ENCODE measurements at regions of chr17 and their contacts with region 1.

Region 1: GRCh38 chr17:82917691-82918345 is 78.0 kb upstream of the ZNF750 start:
- DNase-seq: peak; percentile 62
- ATAC-seq: peak; percentile 79
- H3K4me3 Mint-ChIP-seq: no peak overlapping the region
- H3K27ac Mint-ChIP-seq: no peak overlapping the region
- H3K4me1 Mint-ChIP-seq: 0 out of 2 replicates have a peak, but pooled peaks cover 3% of the 10 kb centered on the region
- H3K27me3 Mint-ChIP-seq: no peaks in the 10 kb centered on the region
- CTCF ChIP-seq: no peak

Region 2: DNA sequence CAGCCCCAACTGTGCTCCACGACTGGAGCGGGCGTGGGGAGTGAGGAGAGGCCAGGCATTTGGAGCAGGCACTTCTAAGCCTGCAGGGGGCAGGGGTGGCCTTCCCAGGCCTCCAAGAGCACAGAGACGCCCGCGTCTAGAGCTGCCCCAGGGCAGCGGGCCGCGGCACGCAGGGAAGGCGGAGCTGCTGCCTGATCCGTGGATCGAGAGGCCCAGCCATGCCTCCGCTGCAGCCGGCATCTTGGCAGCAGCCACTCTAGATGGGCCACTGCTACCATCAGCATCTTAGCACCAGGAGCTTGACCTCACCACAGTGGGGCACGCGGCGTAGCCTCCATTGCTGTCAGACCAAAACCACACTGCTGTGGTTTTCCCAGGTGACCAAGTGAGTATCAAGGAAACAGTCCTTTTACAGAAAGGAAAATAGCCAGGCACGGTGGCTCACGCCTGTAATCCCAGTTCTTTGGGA is 249.2 kb before region 1 on chr17:
- CTCF ChIA-PET with region 1: interaction called, 10 read pairs
- POLR2A ChIA-PET with region 1: no interaction called
- DNase-seq: peak; percentile 79
- ATAC-seq: peak; percentile 98
- H3K4me3 Mint-ChIP-seq: 0 out of 2 replicates have a peak overlapping the region, but pooled peaks have one; percentile 26
- H3K27ac Mint-ChIP-seq: peak overlapping the region; percentile 83; the same call in 1 of the 2 replicates
- H3K4me1 Mint-ChIP-seq: peaks cover 4% of the 10 kb centered on the region
- H3K27me3 Mint-ChIP-seq: no peaks in the 10 kb centered on the region
- CTCF ChIP-seq: 0 out of 2 replicates have a peak, but pooled peaks have one; percentile 21

Region 3: GRCh38 chr17:82781894-82782274 is 135.9 kb before region 1 on chr17:
- CTCF ChIA-PET with region 1: interaction called, 16 read pairs
- POLR2A ChIA-PET with region 1: no interaction called
- DNase-seq: peak; percentile 87
- ATAC-seq: peak; percentile 98
- H3K4me3 Mint-ChIP-seq: no peak overlapping the region
- H3K27ac Mint-ChIP-seq: 0 out of 2 replicates have a peak overlapping the region, but pooled peaks have one; percentile 8
- H3K4me1 Mint-ChIP-seq: peaks cover 5% of the 10 kb centered on the region
- H3K27me3 Mint-ChIP-seq: no peaks in the 10 kb centered on the region
- CTCF ChIP-seq: peak; percentile 77

Region 4: DNA sequence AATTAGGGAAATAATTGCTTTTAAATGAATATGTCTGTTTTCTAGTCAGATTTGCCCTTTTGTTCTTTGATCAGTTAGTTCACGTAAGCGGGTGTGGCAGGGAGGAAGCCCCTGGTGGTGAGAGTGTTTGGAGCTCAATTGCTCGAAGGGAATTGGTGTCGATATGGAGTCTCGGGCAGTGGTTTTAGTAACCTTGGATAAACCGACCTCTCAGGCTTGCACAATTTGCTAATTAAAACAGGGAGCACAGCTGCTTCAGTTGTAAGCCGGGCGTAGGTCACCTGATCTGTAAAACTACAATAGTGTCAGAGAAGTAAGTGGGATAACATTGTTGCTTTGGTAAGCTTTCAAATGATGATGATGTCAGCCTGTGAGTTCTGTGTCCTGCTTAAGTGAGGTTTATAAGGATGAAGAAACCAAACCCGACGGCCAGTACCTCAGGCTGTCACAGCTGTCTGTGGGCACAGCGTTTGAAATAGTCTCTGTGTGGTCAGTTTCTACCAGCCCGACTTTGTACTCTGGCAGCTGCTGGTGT is 80.9 kb before region 1 on chr17:
- CTCF ChIA-PET with region 1: interaction called, 13 read pairs
- POLR2A ChIA-PET with region 1: no interaction called
- DNase-seq: no peak
- ATAC-seq: no peak
- H3K4me3 Mint-ChIP-seq: no peak overlapping the region
- H3K27ac Mint-ChIP-seq: peak overlapping the region; percentile 92
- H3K4me1 Mint-ChIP-seq: peaks cover 51% of the 10 kb centered on the region
- H3K27me3 Mint-ChIP-seq: no peaks in the 10 kb centered on the region
- CTCF ChIP-seq: no peak

Region 5: DNA sequence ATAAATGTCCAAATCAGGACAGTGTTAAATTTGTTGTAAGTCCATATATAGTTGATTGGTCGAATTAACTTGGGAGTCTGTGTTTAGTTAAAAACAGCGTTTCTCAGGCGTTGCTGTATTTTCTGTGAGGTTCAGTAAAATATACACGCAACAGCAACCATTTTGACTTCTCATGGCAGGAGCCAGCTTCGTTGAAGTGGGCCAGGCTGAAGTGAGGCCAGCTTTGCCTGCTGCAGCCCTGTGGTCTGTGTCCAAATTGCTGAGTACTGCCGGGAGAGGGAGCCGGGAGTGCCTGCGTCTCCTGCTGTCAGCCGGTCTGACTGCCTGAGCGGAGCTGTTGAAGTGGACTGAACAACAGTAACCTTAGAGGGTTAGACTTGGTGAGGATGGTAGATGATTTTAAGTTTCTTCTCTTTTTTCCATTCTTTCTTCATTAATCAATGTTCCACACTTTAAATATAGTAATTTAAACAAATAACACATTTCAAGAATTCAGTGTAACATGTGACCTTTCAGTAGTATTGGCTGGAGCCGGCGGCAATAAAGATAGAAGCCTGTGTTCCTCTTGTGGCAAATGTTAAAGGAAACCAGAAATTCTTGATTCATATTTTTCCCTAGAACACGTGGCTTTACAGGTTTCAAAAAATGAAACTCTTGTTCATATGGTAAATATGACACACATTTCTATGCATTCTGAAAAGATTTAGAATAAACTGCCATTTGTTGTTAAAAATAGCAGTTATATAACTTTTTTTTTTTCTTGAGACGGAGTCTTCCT is 41.0 kb before region 1 on chr17:
- CTCF ChIA-PET with region 1: interaction called, 14 read pairs
- POLR2A ChIA-PET with region 1: no interaction called
- DNase-seq: peak; percentile 41
- ATAC-seq: peak; percentile 47
- H3K4me3 Mint-ChIP-seq: no peak overlapping the region
- H3K27ac Mint-ChIP-seq: peak overlapping the region; percentile 93
- H3K4me1 Mint-ChIP-seq: peaks cover 35% of the 10 kb centered on the region
- H3K27me3 Mint-ChIP-seq: no peaks in the 10 kb centered on the region
- CTCF ChIP-seq: no peak

Region 6: DNA sequence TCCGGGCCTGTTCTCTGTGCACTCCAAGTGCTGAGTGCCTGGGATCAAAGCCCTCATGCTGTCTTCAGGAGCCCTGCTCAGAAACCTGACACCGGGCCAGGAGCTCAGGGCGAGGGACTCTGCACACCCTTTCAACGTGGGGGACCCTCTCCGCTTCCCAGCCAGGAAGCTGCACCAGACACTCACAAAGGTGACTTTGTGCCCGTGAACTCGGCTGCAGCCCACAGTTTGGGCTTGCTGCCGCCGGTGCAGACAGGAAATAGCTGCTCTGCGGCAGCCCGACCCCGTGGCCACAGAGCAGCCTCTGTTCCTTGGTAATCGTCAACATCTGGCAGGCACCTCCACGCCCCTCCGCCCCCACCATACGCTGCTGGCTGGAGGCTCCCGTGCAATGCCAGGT is 68.2 kb after region 1 on chr17:
- CTCF ChIA-PET with region 1: no interaction called
- POLR2A ChIA-PET with region 1: no interaction called
- DNase-seq: peak; percentile 49
- ATAC-seq: peak; percentile 89
- H3K4me3 Mint-ChIP-seq: no peak overlapping the region; the same call in 1 of the 2 replicates
- H3K27ac Mint-ChIP-seq: peak overlapping the region; percentile 88
- H3K4me1 Mint-ChIP-seq: peaks cover 32% of the 10 kb centered on the region
- H3K27me3 Mint-ChIP-seq: no peaks in the 10 kb centered on the region
- CTCF ChIP-seq: no peak

Region 7: DNA sequence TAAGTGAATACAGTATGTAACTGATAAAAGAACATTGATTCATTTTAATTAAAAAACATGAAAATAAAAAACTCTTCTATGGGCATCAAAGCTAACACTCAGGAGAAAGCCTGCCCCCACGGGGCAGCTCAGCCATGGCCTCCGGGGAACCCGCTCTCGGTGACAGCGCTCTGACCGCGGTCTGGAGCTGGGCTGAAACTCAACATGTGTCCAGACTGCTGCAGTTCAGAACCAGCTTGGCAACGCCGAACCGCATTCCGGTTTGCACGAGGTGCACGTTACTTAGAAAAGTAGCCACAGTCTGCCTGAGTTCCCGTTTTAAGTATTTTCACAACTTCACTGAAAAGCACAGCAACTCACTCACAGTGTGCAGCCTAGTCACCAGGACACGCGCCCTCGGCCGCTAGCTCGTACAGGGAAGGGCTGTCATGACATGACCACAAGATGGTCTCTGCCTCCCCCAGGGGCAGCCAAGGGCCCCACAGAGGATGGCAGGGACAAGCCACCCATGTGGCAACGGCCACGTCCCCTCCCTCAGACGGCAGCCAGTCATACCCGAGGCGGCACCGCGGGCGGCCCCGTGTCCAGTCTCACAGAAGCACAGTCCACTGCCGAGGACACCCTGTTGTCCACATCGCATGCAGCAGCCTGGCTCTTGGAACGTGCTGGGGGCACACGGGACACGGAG is 84.4 kb after region 1 on chr17:
- CTCF ChIA-PET with region 1: no interaction called
- POLR2A ChIA-PET with region 1: no interaction called
- DNase-seq: no peak
- ATAC-seq: no peak
- H3K4me3 Mint-ChIP-seq: no peak overlapping the region
- H3K27ac Mint-ChIP-seq: 0 out of 2 replicates have a peak overlapping the region, but pooled peaks have one; percentile 27
- H3K4me1 Mint-ChIP-seq: no peaks in the 10 kb centered on the region
- H3K27me3 Mint-ChIP-seq: no peaks in the 10 kb centered on the region
- CTCF ChIP-seq: no peak

Region 8: GRCh38 chr17:83161298-83162034 is 243.6 kb after region 1 on chr17:
- CTCF ChIA-PET with region 1: no interaction called
- POLR2A ChIA-PET with region 1: no interaction called
- DNase-seq: no peak
- ATAC-seq: no peak
- H3K4me3 Mint-ChIP-seq: no peak overlapping the region
- H3K27ac Mint-ChIP-seq: no peak overlapping the region
- H3K4me1 Mint-ChIP-seq: no peaks in the 10 kb centered on the region
- H3K27me3 Mint-ChIP-seq: no peaks in the 10 kb centered on the region
- CTCF ChIP-seq: no peak

Measured in WTC11 (cell line).